CD8-positive, alpha-beta T cell (primary cell): ENCODE measurements at regions of chr6 and their contacts with region 1.

Region 1: DNA sequence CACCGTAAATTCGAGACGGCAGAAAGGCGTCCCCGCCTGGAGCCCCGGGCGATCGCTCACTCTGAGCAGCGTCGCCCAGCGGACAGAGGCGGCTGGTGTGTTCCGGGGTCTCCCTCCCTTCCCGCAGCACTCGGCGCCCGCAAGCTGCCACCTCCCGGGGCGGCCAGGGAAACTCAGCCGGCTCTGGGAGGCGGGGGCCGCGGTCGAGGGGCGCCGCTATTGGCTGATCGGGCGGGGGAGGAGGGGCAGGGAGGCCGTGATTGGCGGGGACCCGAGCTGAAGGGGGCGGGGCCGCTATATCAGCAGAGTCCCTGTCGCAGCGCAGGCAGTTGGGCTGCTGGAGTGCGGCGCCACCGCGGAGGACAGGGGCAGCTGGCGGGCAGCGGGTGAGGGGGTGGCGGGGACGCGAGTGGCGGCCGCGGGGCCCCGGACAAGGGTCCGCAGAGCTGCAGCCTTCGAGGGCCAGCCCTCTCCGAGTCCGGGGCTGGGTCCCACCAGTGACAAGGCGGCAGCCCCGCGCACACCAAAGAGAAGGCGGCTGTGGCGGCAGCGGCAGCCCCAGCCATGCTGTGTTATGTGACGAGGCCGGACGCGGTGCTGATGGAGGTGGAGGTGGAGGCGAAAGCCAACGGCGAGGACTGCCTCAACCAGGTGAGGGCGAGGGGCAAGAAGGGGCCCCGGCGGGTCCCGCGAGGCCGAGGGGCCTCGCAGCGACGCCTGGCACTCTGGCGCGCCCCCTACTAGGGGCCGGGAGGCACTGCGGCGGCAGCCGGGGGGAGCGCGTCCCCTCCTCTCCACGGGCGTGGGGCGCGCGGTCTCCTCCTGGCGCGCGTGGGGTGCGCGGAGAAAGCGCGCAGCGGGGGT is at the start of gene MYLIP:
- DNase-seq: peak; percentile 96 to 99 (median 97)
- ATAC-seq: peak; percentile 81
- H3K4me3 ChIP-seq: peak within 1 kb of the TSS; percentile 75 to 96
- H3K4me3 Mint-ChIP-seq: peak within 1 kb of the TSS; percentile 96
- H3K27ac ChIP-seq: peak within 1 kb of the TSS; percentile 90 to 94
- H3K27ac Mint-ChIP-seq: peak within 1 kb of the TSS; percentile 96
- H3K4me1 ChIP-seq: peaks cover 29% of the 10 kb centered on the region
- H3K4me1 Mint-ChIP-seq: peaks cover 33% of the 10 kb centered on the region
- H3K27me3 ChIP-seq: peaks cover 0 to 2% of the 10 kb centered on the region in 2 experiments
- H3K27me3 Mint-ChIP-seq: no peaks in the 10 kb centered on the region
- CTCF ChIP-seq: peak; percentile 61
- total RNA-seq, gene MYLIP: 225 to 231 TPM

Region 2: GRCh38 chr6:15662326-15663129 is 466.5 kb before region 1 on chr6 and contains the start of gene DTNBP1:
- CTCF ChIA-PET with region 1: interaction called, 3 read pairs
- POLR2A ChIA-PET with region 1: no interaction called
- intact Hi-C with region 1: loop called (anchors 1 to 2 kb)
- DNase-seq: peak; percentile 58 to 90 (median 82)
- ATAC-seq: peak; percentile 73
- H3K4me3 ChIP-seq: peak within 1 kb of the TSS; percentile 67 to 76
- H3K4me3 Mint-ChIP-seq: peak within 1 kb of the TSS; percentile 83
- H3K27ac ChIP-seq: peak within 1 kb of the TSS; percentile 55 to 73
- H3K27ac Mint-ChIP-seq: peak within 1 kb of the TSS; percentile 73
- H3K4me1 ChIP-seq: peaks cover 7% of the 10 kb centered on the region
- H3K4me1 Mint-ChIP-seq: peaks cover 41% of the 10 kb centered on the region
- H3K27me3 ChIP-seq: no peaks in the 10 kb centered on the region
- H3K27me3 Mint-ChIP-seq: peaks cover 2% of the 10 kb centered on the region
- CTCF ChIP-seq: no peak
- total RNA-seq, gene DTNBP1: 12.3 to 12.6 TPM

Region 3: DNA sequence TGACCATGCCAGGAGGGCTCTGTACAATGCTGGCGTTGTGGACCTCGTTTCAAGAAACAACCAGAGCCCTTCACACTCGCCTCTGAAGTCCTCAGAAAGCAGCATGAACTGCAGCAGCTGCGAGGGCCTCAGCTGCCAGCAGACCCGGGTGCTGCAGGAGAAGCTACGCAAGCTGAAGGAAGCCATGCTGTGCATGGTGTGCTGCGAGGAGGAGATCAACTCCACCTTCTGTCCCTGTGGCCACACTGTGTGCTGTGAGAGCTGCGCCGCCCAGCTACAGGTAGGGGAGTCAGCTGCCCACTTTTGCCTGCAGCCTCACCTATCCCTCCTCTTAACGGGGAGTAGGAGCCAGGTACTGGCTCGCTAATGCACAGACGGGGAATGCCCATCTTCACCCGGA is 16.0 kb after region 1 on chr6:
- CTCF ChIA-PET with region 1: interaction called, 4 read pairs
- POLR2A ChIA-PET with region 1: interaction called, 6 read pairs
- intact Hi-C with region 1: loop called in 1 of 2 experiments (anchors 2 kb)
- DNase-seq: no peak
- ATAC-seq: no peak
- H3K4me3 ChIP-seq: no peak overlapping the region
- H3K4me3 Mint-ChIP-seq: no peak overlapping the region
- H3K27ac ChIP-seq: no peak overlapping the region
- H3K27ac Mint-ChIP-seq: no peak overlapping the region
- H3K4me1 ChIP-seq: peaks cover 7% of the 10 kb centered on the region
- H3K4me1 Mint-ChIP-seq: peaks cover 62% of the 10 kb centered on the region
- H3K27me3 ChIP-seq: no peaks in the 10 kb centered on the region
- H3K27me3 Mint-ChIP-seq: no peaks in the 10 kb centered on the region
- CTCF ChIP-seq: no peak

Region 4: GRCh38 chr6:16183187-16183664 is 54.2 kb after region 1 on chr6:
- CTCF ChIA-PET with region 1: interaction called, 25 read pairs
- POLR2A ChIA-PET with region 1: interaction called, 54 read pairs
- intact Hi-C with region 1: loop called (anchors 1 to 2 kb)
- DNase-seq: peak in 2 of 9 experiments; percentile 44 to 62
- ATAC-seq: peak; percentile 36
- H3K4me3 ChIP-seq: no peak overlapping the region
- H3K4me3 Mint-ChIP-seq: no peak overlapping the region
- H3K27ac ChIP-seq: no peak overlapping the region
- H3K27ac Mint-ChIP-seq: no peak overlapping the region
- H3K4me1 ChIP-seq: peaks cover 17% of the 10 kb centered on the region
- H3K4me1 Mint-ChIP-seq: peaks cover 35% of the 10 kb centered on the region
- H3K27me3 ChIP-seq: no peaks in the 10 kb centered on the region
- H3K27me3 Mint-ChIP-seq: no peaks in the 10 kb centered on the region
- CTCF ChIP-seq: peak; percentile 89

Region 5: DNA sequence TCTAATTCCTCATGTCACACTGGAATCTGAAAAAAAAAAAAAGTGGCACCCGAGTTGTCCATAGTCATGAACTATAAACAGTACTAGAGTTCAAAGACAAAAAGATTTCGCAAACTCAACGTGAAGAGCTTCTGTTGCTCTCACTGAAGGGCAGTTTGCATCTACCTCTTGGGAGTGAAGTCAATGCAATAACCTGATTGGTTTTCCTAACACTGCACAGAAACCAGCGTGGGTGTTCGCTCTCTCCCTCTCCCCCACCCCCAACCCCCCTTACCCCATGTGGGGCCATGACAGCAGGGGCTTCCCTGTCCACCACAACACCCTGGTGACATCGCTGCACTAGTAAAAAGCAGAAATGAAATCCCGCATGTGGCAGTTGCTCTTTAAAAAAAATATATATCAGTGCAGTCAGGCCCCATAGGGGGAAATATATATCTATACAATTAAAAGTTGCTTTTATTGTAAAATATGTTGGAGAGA is 176.3 kb after region 1 on chr6:
- CTCF ChIA-PET with region 1: no interaction called
- POLR2A ChIA-PET with region 1: no interaction called
- intact Hi-C with region 1: no loop called
- DNase-seq: no peak
- ATAC-seq: no peak
- H3K4me3 ChIP-seq: no peak overlapping the region
- H3K4me3 Mint-ChIP-seq: no peak overlapping the region
- H3K27ac ChIP-seq: no peak overlapping the region
- H3K27ac Mint-ChIP-seq: no peak overlapping the region
- H3K4me1 ChIP-seq: no peaks in the 10 kb centered on the region
- H3K4me1 Mint-ChIP-seq: no peaks in the 10 kb centered on the region
- H3K27me3 ChIP-seq: no peaks in the 10 kb centered on the region
- H3K27me3 Mint-ChIP-seq: no peaks in the 10 kb centered on the region
- CTCF ChIP-seq: no peak

Region 6: DNA sequence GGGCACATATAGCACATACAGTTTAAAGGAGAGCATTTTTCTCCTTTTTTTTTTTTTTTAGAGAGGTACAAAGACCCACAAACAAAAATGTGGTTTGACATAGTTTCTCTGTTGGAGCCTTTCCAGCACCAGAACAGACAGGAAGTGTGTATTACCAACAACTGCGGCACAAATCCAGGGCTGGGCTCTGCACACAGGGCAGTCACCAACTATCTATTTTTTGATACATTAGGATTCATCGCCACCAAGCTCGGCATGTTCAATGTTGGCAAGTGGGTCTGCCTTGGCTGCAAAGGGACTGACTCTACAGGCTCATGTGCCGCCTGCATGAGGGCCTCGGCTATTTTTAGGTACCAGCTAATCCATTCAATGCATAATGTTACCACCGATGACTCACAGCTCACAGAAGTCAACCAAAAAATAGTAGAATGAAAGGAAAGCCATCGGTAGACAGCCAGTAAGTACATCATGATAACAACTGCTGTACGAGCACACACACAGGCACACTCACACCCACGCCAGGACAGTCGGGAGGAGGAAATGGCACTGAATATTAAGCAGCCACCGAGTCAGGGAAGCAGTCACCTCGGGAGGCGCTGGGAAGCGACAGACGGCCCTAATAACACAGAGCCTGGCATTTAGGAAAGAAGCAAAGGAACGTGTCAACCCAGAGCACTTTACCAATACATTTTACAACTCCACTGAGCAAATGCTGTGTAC is 191.0 kb after region 1 on chr6:
- CTCF ChIA-PET with region 1: no interaction called
- POLR2A ChIA-PET with region 1: no interaction called
- intact Hi-C with region 1: loop called (anchors 5 kb)
- DNase-seq: peak; percentile 27 to 90 (median 68)
- ATAC-seq: peak; percentile 58
- H3K4me3 ChIP-seq: peak overlapping the region; percentile 17 to 33
- H3K4me3 Mint-ChIP-seq: peak overlapping the region; percentile 67
- H3K27ac ChIP-seq: peak overlapping the region; percentile 69 to 85
- H3K27ac Mint-ChIP-seq: peak overlapping the region; percentile 94
- H3K4me1 ChIP-seq: peaks cover 73% of the 10 kb centered on the region
- H3K4me1 Mint-ChIP-seq: peaks cover 75% of the 10 kb centered on the region
- H3K27me3 ChIP-seq: no peaks in the 10 kb centered on the region
- H3K27me3 Mint-ChIP-seq: no peaks in the 10 kb centered on the region
- CTCF ChIP-seq: no peak

Region 7: GRCh38 chr6:16770701-16771569 is 641.9 kb after region 1 on chr6:
- CTCF ChIA-PET with region 1: no interaction called
- POLR2A ChIA-PET with region 1: no interaction called
- intact Hi-C with region 1: loop called in 1 of 2 experiments (anchors 1 kb)
- DNase-seq: peak; percentile 57 to 89 (median 78)
- ATAC-seq: peak; percentile 78
- H3K4me3 ChIP-seq: no peak overlapping the region
- H3K4me3 Mint-ChIP-seq: peak overlapping the region; percentile 37
- H3K27ac ChIP-seq: no peak overlapping the region
- H3K27ac Mint-ChIP-seq: peak overlapping the region; percentile 41
- H3K4me1 ChIP-seq: peaks cover 25% of the 10 kb centered on the region
- H3K4me1 Mint-ChIP-seq: peaks cover 58% of the 10 kb centered on the region
- H3K27me3 ChIP-seq: no peaks in the 10 kb centered on the region
- H3K27me3 Mint-ChIP-seq: no peaks in the 10 kb centered on the region
- CTCF ChIP-seq: peak; percentile 98

Region 8: DNA sequence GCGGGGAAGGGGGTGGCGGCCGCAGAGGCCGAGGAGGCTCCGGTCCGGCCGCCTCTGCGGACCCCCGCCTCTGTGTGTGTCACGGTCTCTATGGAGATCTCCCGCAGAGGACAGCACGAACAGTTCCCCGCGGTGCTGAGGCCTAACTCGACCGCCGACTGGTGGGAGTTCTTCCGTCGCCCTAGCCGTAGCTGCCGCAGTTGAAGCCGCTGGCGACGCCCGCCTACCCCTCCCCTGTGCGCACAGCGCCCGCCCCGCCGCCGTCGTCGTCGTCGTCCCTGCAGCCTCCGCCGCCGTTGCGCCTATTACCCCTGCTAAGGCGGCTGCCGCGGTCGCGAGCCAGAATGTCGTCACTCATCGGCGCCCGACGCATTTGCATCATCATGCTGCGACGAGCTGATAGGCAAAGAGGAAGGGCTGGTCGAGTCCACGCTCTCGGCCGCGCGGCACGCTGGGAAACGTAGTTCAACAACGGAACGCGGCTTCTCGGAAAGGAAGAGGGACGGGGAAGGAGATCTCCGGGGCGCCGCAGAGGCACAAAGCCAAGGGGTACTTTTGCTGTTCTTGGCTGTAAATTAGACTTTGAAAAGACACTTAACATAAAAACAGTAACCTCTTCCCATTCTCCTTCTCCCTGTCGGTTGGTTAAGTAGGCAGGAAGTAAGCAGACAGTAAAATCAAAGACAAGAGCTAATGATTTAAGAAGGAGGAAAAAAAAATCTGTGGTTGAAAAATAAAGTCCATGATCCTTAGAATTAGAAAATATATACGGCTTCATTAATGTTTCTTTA is 1577.8 kb after region 1 on chr6 and contains the start of gene NUP153:
- CTCF ChIA-PET with region 1: no interaction called
- POLR2A ChIA-PET with region 1: no interaction called
- intact Hi-C with region 1: loop called (anchors 5 to 10 kb)
- DNase-seq: peak; percentile 98 to 100 (median 100)
- ATAC-seq: peak; percentile 77
- H3K4me3 ChIP-seq: peak within 1 kb of the TSS; percentile 84 to 96
- H3K4me3 Mint-ChIP-seq: peak within 1 kb of the TSS; percentile 88
- H3K27ac ChIP-seq: peak within 1 kb of the TSS; percentile 99
- H3K27ac Mint-ChIP-seq: peak within 1 kb of the TSS; percentile 96
- H3K4me1 ChIP-seq: peaks cover 39% of the 10 kb centered on the region
- H3K4me1 Mint-ChIP-seq: peaks cover 40% of the 10 kb centered on the region
- H3K27me3 ChIP-seq: no peaks in the 10 kb centered on the region
- H3K27me3 Mint-ChIP-seq: no peaks in the 10 kb centered on the region
- CTCF ChIP-seq: no peak
- total RNA-seq, gene NUP153: 76.4 to 77.7 TPM